ENCODE measurements at regions of chr4 and their contacts with region 1.

Region 1: DNA sequence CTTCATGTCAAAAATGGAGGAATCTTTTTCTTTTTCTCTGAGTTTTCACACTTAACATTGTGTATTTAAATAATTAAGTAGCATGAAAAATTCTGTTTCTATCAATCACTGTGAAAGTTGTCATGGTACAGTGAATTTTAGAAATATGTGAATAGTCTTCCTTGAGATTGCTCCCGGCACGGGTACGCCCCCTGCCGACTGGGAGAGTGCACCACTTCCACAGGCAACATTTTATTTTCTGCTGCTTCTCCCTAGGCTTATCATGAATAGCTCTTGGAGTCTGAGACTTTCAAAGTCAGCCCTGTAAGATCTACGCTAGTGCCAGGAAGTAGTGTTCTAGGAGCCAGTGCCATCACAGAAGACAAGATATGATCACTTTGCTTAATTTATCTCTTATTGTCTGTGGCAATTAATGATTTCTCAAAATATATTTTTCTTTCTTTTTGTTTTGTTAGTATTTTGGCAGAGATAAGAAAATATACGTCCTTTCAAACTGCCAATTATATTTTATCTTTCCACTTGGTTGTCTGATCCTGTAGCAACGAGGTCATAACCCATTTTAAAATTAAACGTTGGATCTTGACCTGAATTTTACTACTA is 763.8 kb upstream of the AADAT start:
- DNase-seq: peak; percentile 48
- ATAC-seq: peak; percentile 91
- H3K4me3 ChIP-seq: no peak overlapping the region
- H3K27ac ChIP-seq: no peak overlapping the region
- H3K4me1 ChIP-seq: no peaks in the 10 kb centered on the region
- H3K27me3 ChIP-seq: no peaks in the 10 kb centered on the region
- CTCF ChIP-seq: peak; percentile 65 to 92 (median 91)
- POLR2A ChIP-seq: no peak
- RAD21 ChIP-seq: peak; percentile 72

Region 2: GRCh38 chr4:170138580-170139194 is 714.8 kb before region 1 on chr4:
- CTCF ChIA-PET with region 1: no interaction called
- POLR2A ChIA-PET with region 1: no interaction called
- RAD21 ChIA-PET with region 1: no interaction called
- intact Hi-C with region 1: loop called (anchors 10 kb)
- DNase-seq: peak; percentile 71
- ATAC-seq: peak; percentile 97
- H3K4me3 ChIP-seq: no peak overlapping the region
- H3K27ac ChIP-seq: no peak overlapping the region
- H3K4me1 ChIP-seq: no peaks in the 10 kb centered on the region
- H3K27me3 ChIP-seq: no peaks in the 10 kb centered on the region
- CTCF ChIP-seq: peak; percentile 68 to 81 (median 70)
- POLR2A ChIP-seq: no peak
- RAD21 ChIP-seq: peak; percentile 90

Region 3: GRCh38 chr4:170400361-170400760 is 453.2 kb before region 1 on chr4:
- CTCF ChIA-PET with region 1: no interaction called
- POLR2A ChIA-PET with region 1: no interaction called
- RAD21 ChIA-PET with region 1: no interaction called
- intact Hi-C with region 1: loop called (anchors 10 kb)
- DNase-seq: no peak
- ATAC-seq: peak; percentile 81
- H3K4me3 ChIP-seq: no peak overlapping the region
- H3K27ac ChIP-seq: no peak overlapping the region
- H3K4me1 ChIP-seq: no peaks in the 10 kb centered on the region
- H3K27me3 ChIP-seq: no peaks in the 10 kb centered on the region
- CTCF ChIP-seq: peak in 1 of 3 experiments; percentile 31; a peak in 2 of 6 replicates
- POLR2A ChIP-seq: no peak
- RAD21 ChIP-seq: 0 out of 2 replicates have a peak, but pooled peaks have one; percentile 5

Region 4: DNA sequence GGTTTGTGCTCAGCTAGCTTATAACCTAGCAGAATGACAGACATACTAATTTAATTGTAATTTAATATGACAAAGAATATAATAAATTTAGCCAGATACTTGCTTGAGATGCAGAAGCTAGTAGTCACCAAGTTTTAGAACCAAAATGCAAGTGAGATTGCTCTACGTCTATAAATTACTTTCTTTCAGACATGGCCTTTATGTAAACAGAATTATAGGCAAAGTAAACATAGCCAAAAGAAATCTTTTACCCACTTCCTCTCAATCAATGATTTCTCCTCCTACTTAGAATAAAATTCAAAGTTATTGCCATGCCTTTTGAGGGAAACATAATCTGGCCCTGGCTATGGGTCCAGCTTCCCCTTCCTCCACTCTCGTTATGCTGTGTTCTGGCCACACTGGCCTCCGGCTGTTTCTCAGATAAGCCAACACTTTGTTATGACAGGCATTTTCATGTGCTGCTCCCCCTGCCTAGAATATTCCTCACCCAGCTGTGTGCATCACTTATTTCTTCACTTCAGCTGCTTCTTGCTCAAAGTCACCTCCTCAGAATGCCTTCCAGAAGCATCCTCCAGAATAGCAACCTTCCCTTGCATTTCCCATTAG is 377.3 kb before region 1 on chr4:
- CTCF ChIA-PET with region 1: no interaction called
- POLR2A ChIA-PET with region 1: no interaction called
- RAD21 ChIA-PET with region 1: no interaction called
- intact Hi-C with region 1: no loop called
- DNase-seq: no peak
- ATAC-seq: no peak
- H3K4me3 ChIP-seq: no peak overlapping the region
- H3K27ac ChIP-seq: no peak overlapping the region
- H3K4me1 ChIP-seq: no peaks in the 10 kb centered on the region
- H3K27me3 ChIP-seq: no peaks in the 10 kb centered on the region
- CTCF ChIP-seq: no peak
- POLR2A ChIP-seq: no peak
- RAD21 ChIP-seq: no peak

Region 5: DNA sequence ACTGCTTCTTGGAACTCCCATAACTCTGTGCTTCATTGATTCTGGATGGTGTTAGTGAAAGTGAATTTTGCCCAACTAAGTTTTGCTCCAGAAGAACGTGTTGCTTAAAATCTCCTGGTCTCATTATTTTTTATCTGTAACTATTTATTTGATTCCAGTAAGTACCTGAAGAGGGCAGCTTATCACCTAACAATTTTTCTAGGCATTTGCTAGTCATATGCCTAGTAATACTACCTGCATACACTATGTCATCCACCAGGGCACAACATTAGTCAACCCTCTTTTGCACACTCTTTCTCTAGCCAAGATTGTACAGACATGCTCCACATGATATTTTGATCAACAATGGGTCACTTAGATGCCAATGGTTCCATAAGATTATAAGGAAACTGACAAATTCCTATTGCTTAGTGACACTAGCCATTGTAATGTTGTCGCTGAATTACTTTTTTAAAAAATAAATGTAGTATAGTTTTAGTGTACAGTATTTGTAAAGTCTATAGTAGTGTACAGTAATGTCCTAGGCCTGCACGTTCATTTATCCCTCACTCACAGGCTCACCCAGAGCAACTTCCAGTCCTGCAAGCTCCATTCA is 263.8 kb before region 1 on chr4:
- CTCF ChIA-PET with region 1: interaction called, 12 read pairs
- POLR2A ChIA-PET with region 1: no interaction called
- RAD21 ChIA-PET with region 1: interaction called in 1 of 2 experiments, 6 read pairs
- intact Hi-C with region 1: loop called (anchors 1 kb)
- DNase-seq: peak; percentile 51
- ATAC-seq: peak; percentile 99
- H3K4me3 ChIP-seq: no peak overlapping the region
- H3K27ac ChIP-seq: no peak overlapping the region
- H3K4me1 ChIP-seq: no peaks in the 10 kb centered on the region
- H3K27me3 ChIP-seq: no peaks in the 10 kb centered on the region
- CTCF ChIP-seq: peak; percentile 60 to 86 (median 68)
- POLR2A ChIP-seq: no peak
- RAD21 ChIP-seq: peak; percentile 77

Region 6: GRCh38 chr4:172202480-172203076 is 1349.1 kb after region 1 on chr4:
- CTCF ChIA-PET with region 1: no interaction called
- POLR2A ChIA-PET with region 1: no interaction called
- RAD21 ChIA-PET with region 1: no interaction called
- intact Hi-C with region 1: loop called (anchors 10 kb)
- DNase-seq: peak; percentile 32
- ATAC-seq: peak; percentile 67
- H3K4me3 ChIP-seq: no peak overlapping the region
- H3K27ac ChIP-seq: no peak overlapping the region
- H3K4me1 ChIP-seq: no peaks in the 10 kb centered on the region
- H3K27me3 ChIP-seq: no peaks in the 10 kb centered on the region
- CTCF ChIP-seq: peak; percentile 56 to 75 (median 63)
- POLR2A ChIP-seq: no peak
- RAD21 ChIP-seq: peak; percentile 83

Measured in HCT116 (cell line).